IMR-90 (cell line): ENCODE measurements at regions of chr3 and their contacts with region 1.

Region 1: GRCh38 chr3:9067352-9067975 is 104.2 kb upstream of the RAD18 start:
- DNase-seq: peak; percentile 71
- ATAC-seq: peak; percentile 92
- H3K4me3 ChIP-seq: no peak overlapping the region
- H3K27ac ChIP-seq: no peak overlapping the region
- H3K4me1 ChIP-seq: no peaks in the 10 kb centered on the region
- H3K27me3 ChIP-seq: peaks cover 14% of the 10 kb centered on the region
- CTCF ChIP-seq: peak; percentile 96
- POLR2A ChIP-seq: peak; percentile 56; the same call in 1 of the 2 replicates
- RAD21 ChIP-seq: peak; percentile 92

Region 2: DNA sequence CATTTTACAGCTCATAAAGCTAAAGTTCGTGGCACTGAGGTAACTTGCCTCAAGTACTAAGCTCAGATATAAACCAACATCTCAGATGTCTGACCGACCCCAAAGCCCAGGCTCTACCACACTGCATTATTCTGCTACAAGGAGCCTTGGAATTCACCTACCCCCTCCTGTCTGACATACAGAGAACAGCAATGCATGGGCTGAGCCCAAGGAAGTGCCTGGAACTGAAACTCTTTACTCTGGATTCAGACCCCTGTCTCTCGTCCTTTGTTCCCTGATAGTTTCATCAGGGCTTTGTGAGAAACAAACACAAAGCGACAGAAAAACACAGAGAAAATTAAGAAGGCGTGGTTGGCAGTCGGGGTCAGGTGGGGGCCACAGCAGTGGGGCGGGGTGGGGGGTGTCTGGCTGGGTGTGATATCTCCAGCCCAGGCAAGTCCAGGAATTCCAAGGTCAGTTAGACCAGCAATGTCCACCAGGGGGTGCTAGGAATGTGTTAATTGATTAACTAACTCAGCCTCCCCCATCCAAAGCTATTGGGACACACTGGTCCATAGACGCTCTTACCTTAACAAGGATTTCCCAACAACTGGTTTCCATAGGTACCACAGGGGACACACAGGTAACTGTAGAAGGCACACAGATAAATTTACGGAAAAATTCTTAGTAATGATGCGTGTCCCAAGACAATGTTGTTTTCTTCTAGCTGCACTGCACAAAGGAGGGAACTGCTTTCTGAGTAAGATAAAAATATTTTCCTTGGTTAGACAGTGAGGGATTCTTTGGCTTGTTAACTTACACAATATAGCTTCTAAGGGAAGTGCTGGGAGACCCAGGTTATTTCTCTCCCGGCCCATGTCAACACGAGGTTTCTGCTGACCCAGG is 404.0 kb before region 1 on chr3:
- CTCF ChIA-PET with region 1: no interaction called
- POLR2A ChIA-PET with region 1: no interaction called
- dilution Hi-C with region 1: no loop called
- in situ Hi-C with region 1: loop called (anchors 25 kb)
- intact Hi-C with region 1: loop called (anchors 1 kb)
- DNase-seq: peak; percentile 61
- ATAC-seq: peak; percentile 67
- H3K4me3 ChIP-seq: no peak overlapping the region
- H3K27ac ChIP-seq: no peak overlapping the region
- H3K4me1 ChIP-seq: peaks cover 8% of the 10 kb centered on the region
- H3K27me3 ChIP-seq: no peaks in the 10 kb centered on the region; the same call in 1 of the 2 replicates
- CTCF ChIP-seq: peak; percentile 58
- POLR2A ChIP-seq: no peak
- RAD21 ChIP-seq: peak; percentile 55

Region 3: GRCh38 chr3:8899986-8900385 is 167.5 kb before region 1 on chr3:
- CTCF ChIA-PET with region 1: no interaction called
- POLR2A ChIA-PET with region 1: no interaction called
- dilution Hi-C with region 1: no loop called
- in situ Hi-C with region 1: no loop called
- intact Hi-C with region 1: no loop called
- DNase-seq: peak; percentile 47
- ATAC-seq: peak; percentile 73
- H3K4me3 ChIP-seq: no peak overlapping the region
- H3K27ac ChIP-seq: no peak overlapping the region
- H3K4me1 ChIP-seq: peaks cover 6% of the 10 kb centered on the region
- H3K27me3 ChIP-seq: no peaks in the 10 kb centered on the region
- CTCF ChIP-seq: 0 out of 2 replicates have a peak, but pooled peaks have one; percentile 14
- POLR2A ChIP-seq: no peak
- RAD21 ChIP-seq: no peak

Region 4: DNA sequence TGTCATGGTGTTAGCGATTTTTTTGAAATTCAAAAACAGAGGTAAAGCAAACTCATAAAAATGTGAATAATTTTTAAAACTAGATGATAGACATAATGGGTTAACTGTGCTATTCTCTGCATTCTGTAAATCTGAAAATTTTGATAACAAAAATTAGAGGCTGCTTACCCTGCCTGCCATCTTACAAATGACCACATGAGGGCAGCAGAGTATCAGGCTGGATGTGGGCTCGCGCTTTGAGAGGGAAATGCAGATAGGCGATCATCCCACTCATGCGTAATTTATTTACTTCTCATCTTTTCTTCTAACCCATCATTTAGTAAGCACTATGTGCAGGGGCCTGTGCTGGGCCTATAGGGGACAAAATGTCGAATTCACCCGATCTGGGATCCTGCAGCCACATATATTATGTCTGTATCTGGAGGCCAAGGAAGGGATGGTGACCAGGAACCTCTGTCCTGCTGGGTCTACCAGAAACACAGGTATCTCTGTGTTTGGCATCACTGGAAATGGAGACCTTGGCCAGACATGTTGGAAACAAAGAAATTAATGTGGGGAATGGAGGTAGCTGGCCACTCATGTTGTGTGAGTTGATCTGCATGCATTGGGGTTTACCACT is 96.4 kb before region 1 on chr3:
- CTCF ChIA-PET with region 1: no interaction called
- POLR2A ChIA-PET with region 1: no interaction called
- dilution Hi-C with region 1: no loop called
- in situ Hi-C with region 1: loop called (anchors 5 kb)
- intact Hi-C with region 1: loop called (anchors 1 kb)
- DNase-seq: peak; percentile 63
- ATAC-seq: peak; percentile 94
- H3K4me3 ChIP-seq: no peak overlapping the region
- H3K27ac ChIP-seq: no peak overlapping the region
- H3K4me1 ChIP-seq: no peaks in the 10 kb centered on the region
- H3K27me3 ChIP-seq: peaks cover 2% of the 10 kb centered on the region; the same call in 1 of the 2 replicates
- CTCF ChIP-seq: peak; percentile 97
- POLR2A ChIP-seq: no peak
- RAD21 ChIP-seq: peak; percentile 97

Region 5: GRCh38 chr3:8987645-8988383 is 79.7 kb before region 1 on chr3:
- CTCF ChIA-PET with region 1: no interaction called
- POLR2A ChIA-PET with region 1: no interaction called
- dilution Hi-C with region 1: no loop called
- in situ Hi-C with region 1: no loop called
- intact Hi-C with region 1: loop called (anchors 1 kb)
- DNase-seq: peak; percentile 40
- ATAC-seq: peak; percentile 83
- H3K4me3 ChIP-seq: no peak overlapping the region
- H3K27ac ChIP-seq: no peak overlapping the region
- H3K4me1 ChIP-seq: no peaks in the 10 kb centered on the region
- H3K27me3 ChIP-seq: peaks cover 4% of the 10 kb centered on the region
- CTCF ChIP-seq: peak; percentile 65
- POLR2A ChIP-seq: no peak
- RAD21 ChIP-seq: peak; percentile 55

Region 6: DNA sequence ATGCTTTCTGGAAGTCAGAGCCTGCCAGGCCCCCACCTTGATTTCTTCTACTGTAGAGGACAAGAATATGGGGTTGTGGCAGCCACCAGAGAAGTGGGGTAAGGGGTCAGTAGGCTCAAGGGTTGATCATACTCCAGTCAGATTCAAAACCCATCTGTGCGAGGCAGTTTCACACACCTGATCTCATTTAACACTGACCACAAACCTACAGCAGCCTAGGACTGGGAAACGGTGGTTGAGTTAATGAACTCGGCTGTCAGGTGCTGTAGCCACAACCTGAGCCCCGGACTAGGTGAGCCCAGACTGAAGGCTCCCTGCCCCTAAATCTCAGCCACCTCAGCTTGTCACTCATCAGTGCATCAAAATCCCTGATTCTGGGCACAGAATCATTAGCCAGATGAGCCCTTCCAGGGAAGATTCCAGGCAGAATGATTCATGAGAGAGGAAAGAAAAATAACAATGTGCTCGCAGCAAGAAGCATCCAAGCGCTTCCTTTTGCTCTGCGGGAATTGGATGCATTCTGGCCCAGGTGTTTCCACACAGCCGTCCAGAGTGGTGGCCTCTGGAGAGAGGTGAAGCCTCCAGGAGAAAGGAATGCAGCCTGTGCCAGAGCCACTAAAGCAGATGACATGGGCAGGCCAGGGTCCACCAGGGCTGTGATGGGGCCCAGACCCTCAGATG is 79.9 kb after region 1 on chr3:
- CTCF ChIA-PET with region 1: no interaction called
- POLR2A ChIA-PET with region 1: no interaction called
- dilution Hi-C with region 1: no loop called
- in situ Hi-C with region 1: no loop called
- intact Hi-C with region 1: no loop called
- DNase-seq: no peak
- ATAC-seq: no peak
- H3K4me3 ChIP-seq: no peak overlapping the region
- H3K27ac ChIP-seq: no peak overlapping the region
- H3K4me1 ChIP-seq: no peaks in the 10 kb centered on the region
- H3K27me3 ChIP-seq: peaks cover 3% of the 10 kb centered on the region
- CTCF ChIP-seq: no peak
- POLR2A ChIP-seq: no peak
- RAD21 ChIP-seq: no peak